Naive thymus-derived CD8-positive, alpha-beta T cell (primary cell): ENCODE measurements at regions of chr9 and their contacts with region 1.

Region 1: GRCh38 chr9:70413798-70414775 is at the start of gene KLF9:
- DNase-seq: peak; percentile 68 to 97 (median 94)
- ATAC-seq: peak; percentile 77 to 84
- H3K4me3 Mint-ChIP-seq: peak within 1 kb of the TSS; percentile 95 to 100 (median 98)
- H3K27ac Mint-ChIP-seq: peak within 1 kb of the TSS; percentile 99 to 100 (median 100)
- H3K4me1 Mint-ChIP-seq: peaks cover 23 to 64% (median 45%) of the 10 kb centered on the region in 4 donors
- H3K27me3 Mint-ChIP-seq: peaks cover 0 to 2% (median 0%) of the 10 kb centered on the region in 5 donors
- polyA plus RNA-seq, gene KLF9: 2.6 to 4.0 (median 3.2) TPM

Region 2: DNA sequence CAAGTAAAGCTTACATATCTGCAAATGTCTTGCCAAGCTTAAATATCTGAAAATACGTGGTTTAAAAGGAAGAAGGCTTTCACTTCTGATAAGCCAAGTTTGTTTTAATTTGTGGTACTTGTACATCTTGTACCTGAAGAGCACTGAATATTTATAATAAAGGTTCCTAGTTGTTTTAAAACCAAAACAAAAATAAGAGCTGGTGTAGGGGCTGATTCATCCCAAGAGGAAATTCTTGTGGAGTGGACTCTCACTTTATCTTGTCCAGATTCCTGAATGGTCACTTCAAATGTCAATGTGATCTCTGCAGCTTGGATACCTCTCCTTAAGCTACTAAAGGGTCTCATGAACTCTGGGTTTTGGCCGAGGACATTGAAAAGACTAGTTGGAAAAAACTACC is 340.9 kb before region 1 on chr9:
- POLR2A ChIA-PET with region 1: no interaction called
- DNase-seq: no peak
- ATAC-seq: no peak
- H3K4me3 Mint-ChIP-seq: no peak overlapping the region
- H3K27ac Mint-ChIP-seq: no peak overlapping the region
- H3K4me1 Mint-ChIP-seq: no peaks in the 10 kb centered on the region
- H3K27me3 Mint-ChIP-seq: peaks cover 0 to 4% (median 0%) of the 10 kb centered on the region in 5 donors

Region 3: DNA sequence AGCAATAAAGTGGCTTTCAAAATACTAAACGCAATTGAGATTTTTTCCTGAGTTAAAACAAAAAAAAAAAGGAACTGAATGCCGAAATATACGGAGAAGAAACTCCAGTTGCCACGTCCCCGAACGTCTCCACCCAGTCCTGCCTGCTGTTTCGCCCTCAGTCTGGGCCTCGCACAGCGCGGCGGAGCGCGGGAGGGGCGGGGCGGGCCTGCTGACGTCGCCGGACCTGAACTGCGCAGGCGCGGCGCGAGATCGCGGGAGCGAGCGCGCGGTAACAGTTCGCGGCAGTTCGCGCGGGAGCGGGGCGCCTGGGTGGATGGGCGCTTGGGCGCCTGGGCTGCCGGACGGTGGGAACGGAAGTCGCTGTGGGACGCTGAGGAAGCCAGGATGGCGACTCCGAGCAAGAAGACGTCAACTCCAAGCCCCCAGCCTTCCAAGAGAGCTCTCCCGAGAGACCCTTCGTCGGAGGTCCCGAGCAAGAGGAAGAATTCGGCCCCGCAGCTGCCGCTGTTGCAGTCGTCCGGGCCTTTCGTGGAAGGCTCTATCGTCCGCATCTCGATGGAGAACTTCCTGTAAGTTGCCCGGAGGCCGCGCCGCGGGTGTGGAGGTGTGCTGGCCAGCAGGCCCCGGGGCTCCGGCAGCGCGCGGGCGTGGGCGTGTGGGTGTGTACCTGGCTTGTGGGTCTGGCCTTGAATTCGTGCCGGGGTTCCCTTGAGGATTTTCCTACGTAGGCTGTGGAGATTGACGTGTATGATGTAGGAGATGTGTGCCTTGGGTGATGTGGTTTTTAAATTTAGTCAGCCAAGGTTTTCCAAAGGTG is 155.2 kb before region 1 on chr9 and contains the start of gene SMC5:
- POLR2A ChIA-PET with region 1: interaction called, 24 read pairs
- DNase-seq: peak; percentile 80 to 94 (median 90)
- ATAC-seq: peak; percentile 86
- H3K4me3 Mint-ChIP-seq: peak within 1 kb of the TSS; percentile 87 to 97 (median 93)
- H3K27ac Mint-ChIP-seq: peak within 1 kb of the TSS; percentile 91 to 99 (median 98)
- H3K4me1 Mint-ChIP-seq: peaks cover 32 to 70% (median 67%) of the 10 kb centered on the region in 4 donors
- H3K27me3 Mint-ChIP-seq: no peaks in the 10 kb centered on the region
- polyA plus RNA-seq, gene SMC5: 15.2 to 17.2 (median 16.9) TPM

Region 4: GRCh38 chr9:70392189-70392588 is 21.9 kb before region 1 on chr9:
- POLR2A ChIA-PET with region 1: interaction called, 51 read pairs
- DNase-seq: no peak
- ATAC-seq: peak; percentile 49 to 66
- H3K4me3 Mint-ChIP-seq: peak overlapping the region in 7 of 10 donors; percentile 15 to 79 (median 51)
- H3K27ac Mint-ChIP-seq: peak overlapping the region in 8 of 10 donors; percentile 32 to 79 (median 60)
- H3K4me1 Mint-ChIP-seq: peaks cover 46 to 90% (median 85%) of the 10 kb centered on the region in 4 donors
- H3K27me3 Mint-ChIP-seq: no peaks in the 10 kb centered on the region

Region 5: DNA sequence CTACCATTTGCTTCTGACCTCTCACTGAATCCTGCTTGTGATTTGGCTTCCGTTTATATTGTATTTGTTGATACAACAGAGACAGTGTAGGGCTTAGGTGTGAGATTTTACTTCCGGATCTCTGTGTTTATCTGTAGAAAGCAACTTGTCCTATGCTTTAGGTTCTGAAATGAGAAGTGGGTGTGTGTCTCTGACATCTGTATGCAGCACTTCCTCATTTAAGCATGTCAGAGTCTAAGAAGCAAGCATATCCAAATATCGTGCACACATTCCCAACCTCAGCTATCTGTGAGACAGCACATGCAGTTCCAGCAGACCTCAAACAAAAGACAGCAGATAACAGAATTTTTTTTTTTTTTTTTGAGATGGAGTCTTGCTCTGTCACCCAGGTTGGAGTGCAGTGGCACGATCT is 15.9 kb before region 1 on chr9:
- POLR2A ChIA-PET with region 1: interaction called, 60 read pairs
- DNase-seq: peak in 3 of 10 donors; percentile 56 to 58 (median 58)
- ATAC-seq: peak; percentile 87 to 95
- H3K4me3 Mint-ChIP-seq: peak overlapping the region; percentile 26 to 81 (median 70)
- H3K27ac Mint-ChIP-seq: peak overlapping the region; percentile 8 to 93 (median 86)
- H3K4me1 Mint-ChIP-seq: peaks cover 35 to 85% (median 73%) of the 10 kb centered on the region in 4 donors
- H3K27me3 Mint-ChIP-seq: no peaks in the 10 kb centered on the region

Region 6: DNA sequence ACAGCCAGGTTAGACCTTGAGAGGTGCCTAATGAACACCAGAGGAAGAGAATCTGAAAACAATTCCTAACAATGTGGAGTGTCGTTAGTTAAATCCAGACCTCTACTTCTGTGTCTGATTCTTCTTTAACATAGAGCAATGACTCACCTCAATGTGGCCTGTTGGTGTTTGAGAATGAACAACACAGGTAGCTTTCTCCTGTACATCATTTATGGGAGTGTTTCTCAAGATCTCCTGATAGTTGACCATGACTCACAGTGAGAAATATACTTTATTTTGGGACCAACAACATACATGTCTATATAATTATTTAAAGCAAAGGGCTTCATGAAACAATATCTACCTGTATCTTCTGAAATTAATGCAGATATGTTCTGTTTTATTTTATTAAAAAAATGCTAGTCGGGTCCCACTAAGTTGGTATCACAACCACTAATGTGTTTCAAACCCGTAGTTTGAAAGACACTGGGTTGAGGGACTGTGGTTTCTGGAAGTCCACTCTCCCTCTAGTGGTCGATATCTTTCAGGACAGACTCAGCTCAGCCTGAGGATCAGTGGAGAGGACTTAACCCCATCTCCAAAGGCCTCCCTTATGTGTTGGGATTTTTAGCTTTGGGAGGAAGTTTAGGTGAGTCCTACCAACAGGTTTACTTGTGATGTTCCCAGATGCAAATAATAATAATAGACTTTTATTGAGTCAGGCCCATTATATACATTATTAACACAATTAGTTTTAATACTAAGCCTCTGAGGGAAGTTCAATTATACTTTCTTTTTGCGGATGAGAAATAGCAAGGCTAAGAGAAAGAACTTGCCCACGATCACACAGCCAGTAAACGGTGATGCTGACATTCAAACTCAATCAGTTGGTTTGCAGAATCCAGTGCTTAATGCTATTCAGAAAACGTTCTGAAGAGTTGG is 70.4 kb after region 1 on chr9:
- POLR2A ChIA-PET with region 1: interaction called, 21 read pairs
- DNase-seq: peak in 4 of 10 donors; percentile 14 to 40 (median 30)
- ATAC-seq: peak; percentile 64 to 96
- H3K4me3 Mint-ChIP-seq: no peak overlapping the region
- H3K27ac Mint-ChIP-seq: peak overlapping the region in 5 of 10 donors; percentile 20 to 80 (median 59)
- H3K4me1 Mint-ChIP-seq: peaks cover 6 to 33% (median 12%) of the 10 kb centered on the region in 4 donors
- H3K27me3 Mint-ChIP-seq: peaks cover 0 to 1% (median 0%) of the 10 kb centered on the region in 5 donors

Region 7: GRCh38 chr9:70510157-70510770 is 96.2 kb after region 1 on chr9:
- POLR2A ChIA-PET with region 1: no interaction called
- DNase-seq: no peak
- ATAC-seq: no peak
- H3K4me3 Mint-ChIP-seq: no peak overlapping the region
- H3K27ac Mint-ChIP-seq: no peak overlapping the region
- H3K4me1 Mint-ChIP-seq: no peaks in the 10 kb centered on the region
- H3K27me3 Mint-ChIP-seq: no peaks in the 10 kb centered on the region

Region 8: DNA sequence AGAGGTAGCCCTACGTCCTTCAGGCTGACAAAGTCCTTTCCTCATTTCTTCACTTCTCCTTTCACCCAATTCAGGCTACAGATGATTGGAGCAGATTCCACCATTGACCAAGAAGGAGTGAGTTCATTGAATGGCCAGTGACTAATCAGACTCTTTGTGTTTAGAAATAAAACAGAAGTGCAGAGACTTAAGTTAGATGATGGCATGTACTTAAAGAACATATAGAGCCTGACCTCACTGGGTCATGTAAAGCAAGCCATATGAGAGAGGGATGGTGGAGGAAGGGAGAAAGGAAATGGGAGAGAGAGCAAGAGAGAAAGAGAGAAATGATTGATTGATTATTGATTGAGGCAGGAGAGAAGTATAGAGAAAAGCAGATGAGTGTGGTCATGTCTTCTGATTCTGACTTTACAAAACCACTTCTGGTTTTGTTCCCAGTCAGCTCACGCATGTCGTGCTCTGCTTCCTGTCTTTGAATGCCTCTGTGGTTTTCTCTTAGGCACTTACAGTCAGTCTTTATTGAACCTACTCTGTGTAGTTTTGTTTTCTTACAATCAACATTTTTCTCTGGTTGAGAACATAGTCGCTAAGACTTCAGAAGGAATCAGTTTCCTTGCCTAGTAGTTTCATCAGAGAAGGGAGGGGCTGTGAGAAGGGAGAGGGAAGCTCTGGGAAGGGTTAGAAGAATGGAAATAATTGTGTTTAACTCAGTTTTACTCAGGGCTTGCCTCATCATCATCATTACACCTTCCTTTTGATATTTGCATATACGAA is 149.5 kb after region 1 on chr9:
- POLR2A ChIA-PET with region 1: interaction called, 56 read pairs
- DNase-seq: peak in 9 of 10 donors; percentile 16 to 84 (median 62)
- ATAC-seq: peak; percentile 95
- H3K4me3 Mint-ChIP-seq: peak overlapping the region; percentile 48 to 78 (median 58)
- H3K27ac Mint-ChIP-seq: peak overlapping the region; percentile 86 to 98 (median 94)
- H3K4me1 Mint-ChIP-seq: peaks cover 28 to 54% (median 44%) of the 10 kb centered on the region in 4 donors
- H3K27me3 Mint-ChIP-seq: no peaks in the 10 kb centered on the region

Region 9: DNA sequence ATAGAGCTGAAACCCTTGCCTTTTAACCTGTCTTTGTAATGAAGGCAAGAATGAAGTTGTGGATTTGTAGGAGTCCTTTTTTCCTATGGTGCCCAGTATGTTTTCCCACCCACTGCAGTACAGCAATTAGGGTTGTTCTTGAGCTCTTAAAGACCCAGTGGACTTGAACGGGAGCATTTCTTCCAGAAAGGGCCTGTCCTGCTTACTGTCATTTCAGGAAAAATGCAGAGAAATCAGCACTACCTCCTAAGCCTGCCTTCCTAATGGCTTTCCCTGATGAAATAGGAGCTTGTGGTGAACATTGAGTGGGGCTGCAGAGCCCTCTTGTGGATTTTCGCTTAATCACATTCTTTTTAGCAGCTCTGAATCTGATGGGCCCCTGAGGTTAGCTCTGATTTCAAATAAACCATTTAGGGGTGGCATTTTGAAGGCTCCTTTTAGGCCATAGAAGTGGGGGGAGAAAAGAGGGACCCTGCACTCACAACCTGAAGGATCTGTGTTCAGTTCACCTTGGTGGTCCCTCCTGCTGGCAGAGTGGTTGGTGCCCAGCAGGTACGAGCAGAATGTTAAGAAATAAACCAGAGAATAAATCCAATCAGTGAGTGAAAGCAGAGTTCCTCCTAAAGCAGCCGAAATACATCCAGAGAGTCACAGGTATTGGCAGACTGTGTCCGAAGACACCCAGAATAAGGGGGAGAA is 188.4 kb after region 1 on chr9:
- POLR2A ChIA-PET with region 1: interaction called, 16 read pairs
- DNase-seq: peak in 9 of 10 donors; percentile 17 to 68 (median 40)
- ATAC-seq: peak; percentile 66 to 83
- H3K4me3 Mint-ChIP-seq: no peak overlapping the region
- H3K27ac Mint-ChIP-seq: peak overlapping the region in 4 of 10 donors; percentile 6 to 61 (median 32)
- H3K4me1 Mint-ChIP-seq: peaks cover 3 to 8% (median 6%) of the 10 kb centered on the region in 4 donors
- H3K27me3 Mint-ChIP-seq: no peaks in the 10 kb centered on the region